Head of caudate nucleus (tissue), 42 donors: ENCODE measurements at regions of chr2 and their contacts with region 1.

Region 1: GRCh38 chr2:209977386-209978239 is 24.8 kb upstream of the RPE start:
- DNase-seq: no peak

Region 2: DNA sequence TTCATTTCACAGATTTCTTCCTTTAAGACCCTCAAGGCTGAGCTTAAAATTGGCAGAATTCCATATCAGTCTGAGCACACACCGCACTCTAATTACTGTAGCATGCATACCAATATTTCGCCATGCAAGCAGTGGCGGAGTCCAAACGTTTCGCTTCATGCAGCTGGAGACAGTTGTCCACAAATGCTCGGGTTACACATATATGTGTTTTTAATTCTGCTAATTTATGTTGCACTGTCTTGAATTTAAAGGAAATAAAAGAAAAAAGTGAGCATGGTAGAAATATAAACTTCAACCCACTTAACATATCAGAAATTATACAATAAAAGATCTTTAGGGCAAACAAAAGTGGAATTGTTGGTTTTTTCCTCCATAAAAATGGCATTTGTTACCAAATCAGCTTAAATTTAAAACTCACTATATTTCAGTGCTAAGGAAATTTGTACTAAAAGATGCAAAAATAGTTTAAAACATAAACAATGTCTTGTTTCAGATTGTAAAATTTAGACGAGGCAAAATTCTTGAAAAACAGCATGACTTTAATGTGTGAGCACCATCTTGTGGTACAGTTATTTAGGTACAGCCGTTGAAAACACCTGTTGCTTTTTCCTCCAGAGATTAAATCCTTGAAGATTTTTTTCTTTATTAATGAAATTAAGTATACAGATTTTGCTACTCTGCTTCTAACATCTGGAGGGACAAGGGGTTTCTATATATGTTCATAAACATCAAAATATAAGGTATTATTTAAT is 217.7 kb after region 1 on chr2:
- intact Hi-C with region 1: loop called (anchors 5 kb)
- DNase-seq: peak in 15 of 42 donors; percentile 6 to 58 (median 15)